WTC11 (cell line): ENCODE measurements at regions of chr11 and their contacts with region 1.

Region 1: DNA sequence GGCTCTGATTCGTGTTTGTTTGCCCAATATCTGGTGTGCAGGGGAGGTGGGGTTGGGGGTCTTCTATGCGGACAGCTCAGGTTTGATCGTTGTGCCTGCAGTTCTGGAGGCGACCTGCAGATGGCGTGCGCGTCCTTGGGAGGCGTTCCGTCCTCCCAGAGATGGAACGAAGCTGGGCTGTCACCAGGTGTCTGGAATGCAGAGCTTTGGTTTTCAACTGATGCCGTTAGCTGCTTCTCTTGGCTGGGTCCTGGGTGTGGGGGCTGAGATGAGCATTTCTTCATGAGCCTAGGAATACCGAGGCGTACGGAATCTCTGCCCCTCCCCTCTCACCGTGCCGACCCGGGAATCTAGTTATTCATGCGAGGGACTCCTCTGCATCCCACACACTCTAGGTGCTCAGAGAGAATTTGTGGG is 98.6 kb downstream of the CEP164 start:
- DNase-seq: peak; percentile 96
- ATAC-seq: peak; percentile 79
- H3K4me3 Mint-ChIP-seq: peak overlapping the region; percentile 16; the same call in 1 of the 2 replicates
- H3K27ac Mint-ChIP-seq: no peak overlapping the region
- H3K4me1 Mint-ChIP-seq: peaks cover 20% of the 10 kb centered on the region
- H3K27me3 Mint-ChIP-seq: peaks cover 3% of the 10 kb centered on the region; the same call in 1 of the 2 replicates
- CTCF ChIP-seq: peak; percentile 95

Region 2: DNA sequence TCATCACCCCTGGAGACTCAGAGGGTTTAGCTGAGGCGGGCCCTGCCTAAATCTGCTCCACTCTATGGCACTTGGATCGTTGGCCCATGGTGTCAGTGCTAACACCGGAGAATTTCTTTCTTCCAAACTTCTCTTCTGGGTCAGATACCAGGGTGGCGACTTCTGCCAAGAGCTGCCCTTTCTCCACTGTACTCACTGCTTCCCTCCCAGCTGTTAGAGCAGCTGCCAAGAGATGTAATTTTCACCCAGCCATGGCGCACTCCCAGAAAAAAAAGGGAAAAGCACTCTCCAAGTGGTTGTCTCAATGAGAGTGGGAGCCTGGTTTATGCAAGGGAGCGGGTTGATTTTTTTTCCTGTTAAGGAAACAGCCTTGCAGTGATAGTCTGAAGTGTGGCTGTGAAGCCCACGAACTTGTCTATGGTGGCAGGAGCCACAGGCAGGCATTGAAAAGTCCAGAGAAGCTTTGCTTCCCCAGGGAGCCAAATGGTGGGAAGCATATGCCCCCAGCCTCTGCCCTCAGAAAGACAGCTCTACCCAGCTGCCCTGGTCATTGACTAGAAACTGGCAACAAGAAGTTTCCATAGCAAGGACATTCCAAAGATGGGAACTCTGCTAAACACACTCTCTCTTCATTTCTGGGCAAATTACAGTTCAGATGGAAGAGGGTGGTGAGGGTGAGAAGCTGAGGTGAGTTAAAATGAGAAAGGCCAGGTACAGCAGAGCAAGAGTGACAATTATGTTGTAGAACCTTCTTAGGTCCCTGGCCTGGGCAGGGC is 205.1 kb before region 1 on chr11:
- CTCF ChIA-PET with region 1: no interaction called
- POLR2A ChIA-PET with region 1: no interaction called
- DNase-seq: no peak
- ATAC-seq: no peak
- H3K4me3 Mint-ChIP-seq: no peak overlapping the region
- H3K27ac Mint-ChIP-seq: no peak overlapping the region
- H3K4me1 Mint-ChIP-seq: peaks cover 3% of the 10 kb centered on the region; the same call in 1 of the 2 replicates
- H3K27me3 Mint-ChIP-seq: no peaks in the 10 kb centered on the region
- CTCF ChIP-seq: no peak

Region 3: DNA sequence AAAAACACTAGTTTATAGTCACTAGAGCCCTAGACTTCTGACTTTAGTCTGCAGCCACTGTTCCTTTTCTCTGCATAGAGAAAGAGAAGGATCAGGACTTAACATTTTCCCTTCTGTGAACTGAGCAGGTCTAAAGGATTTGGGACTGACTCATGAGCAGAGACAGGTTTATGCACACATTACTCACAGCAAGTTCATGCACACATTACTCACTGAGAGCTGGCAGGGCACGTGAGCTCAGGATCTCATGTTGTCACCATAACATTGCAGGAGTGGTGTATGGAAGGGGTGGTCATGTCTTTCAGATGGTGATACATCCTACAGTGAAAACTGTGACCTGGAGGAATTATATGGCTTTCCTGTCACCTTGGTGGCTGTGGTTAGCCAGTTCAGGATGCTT is 42.2 kb before region 1 on chr11:
- CTCF ChIA-PET with region 1: interaction called, 20 read pairs
- POLR2A ChIA-PET with region 1: no interaction called
- DNase-seq: no peak
- ATAC-seq: no peak
- H3K4me3 Mint-ChIP-seq: no peak overlapping the region
- H3K27ac Mint-ChIP-seq: no peak overlapping the region
- H3K4me1 Mint-ChIP-seq: peaks cover 7% of the 10 kb centered on the region
- H3K27me3 Mint-ChIP-seq: no peaks in the 10 kb centered on the region
- CTCF ChIP-seq: no peak

Region 4: DNA sequence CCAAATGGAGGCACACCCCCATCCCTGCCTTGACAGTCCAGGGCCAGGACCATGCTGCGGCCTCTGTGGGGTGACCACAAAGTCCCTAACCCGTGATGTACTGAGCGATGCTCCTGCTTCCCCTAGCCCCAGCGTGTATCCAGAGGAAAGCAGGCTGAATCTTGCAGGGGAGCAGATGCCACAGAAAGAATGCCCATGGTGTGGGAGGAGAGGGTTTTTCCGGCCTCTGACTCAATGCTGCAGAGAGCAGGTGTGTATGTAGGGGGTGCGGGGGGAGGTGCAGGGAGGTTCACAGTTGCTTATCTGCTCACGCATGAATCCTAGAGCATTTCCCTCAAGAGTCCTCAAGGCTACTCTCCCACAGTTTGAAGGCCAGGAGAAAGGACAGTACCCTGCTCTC is 32.0 kb after region 1 on chr11:
- CTCF ChIA-PET with region 1: interaction called, 14 read pairs
- POLR2A ChIA-PET with region 1: no interaction called
- DNase-seq: no peak
- ATAC-seq: no peak
- H3K4me3 Mint-ChIP-seq: no peak overlapping the region
- H3K27ac Mint-ChIP-seq: no peak overlapping the region
- H3K4me1 Mint-ChIP-seq: no peaks in the 10 kb centered on the region
- H3K27me3 Mint-ChIP-seq: no peaks in the 10 kb centered on the region; the same call in 1 of the 2 replicates
- CTCF ChIP-seq: no peak

Region 5: GRCh38 chr11:117511931-117512539 is 85.8 kb after region 1 on chr11:
- CTCF ChIA-PET with region 1: interaction called, 43 read pairs
- POLR2A ChIA-PET with region 1: no interaction called
- DNase-seq: no peak
- ATAC-seq: no peak
- H3K4me3 Mint-ChIP-seq: no peak overlapping the region
- H3K27ac Mint-ChIP-seq: peak overlapping the region; percentile 91
- H3K4me1 Mint-ChIP-seq: peaks cover 37% of the 10 kb centered on the region
- H3K27me3 Mint-ChIP-seq: no peaks in the 10 kb centered on the region
- CTCF ChIP-seq: no peak

Region 6: GRCh38 chr11:117583063-117583801 is 157.0 kb after region 1 on chr11:
- CTCF ChIA-PET with region 1: interaction called, 10 read pairs
- POLR2A ChIA-PET with region 1: no interaction called
- DNase-seq: no peak
- ATAC-seq: peak; percentile 83
- H3K4me3 Mint-ChIP-seq: no peak overlapping the region
- H3K27ac Mint-ChIP-seq: no peak overlapping the region
- H3K4me1 Mint-ChIP-seq: peaks cover 32% of the 10 kb centered on the region
- H3K27me3 Mint-ChIP-seq: peaks cover 6% of the 10 kb centered on the region; the same call in 1 of the 2 replicates
- CTCF ChIP-seq: no peak

Region 7: GRCh38 chr11:117717485-117718314 is 291.4 kb after region 1 on chr11:
- CTCF ChIA-PET with region 1: interaction called, 11 read pairs
- POLR2A ChIA-PET with region 1: no interaction called
- DNase-seq: peak; percentile 50
- ATAC-seq: peak; percentile 73
- H3K4me3 Mint-ChIP-seq: peak overlapping the region; percentile 47
- H3K27ac Mint-ChIP-seq: peak overlapping the region; percentile 60
- H3K4me1 Mint-ChIP-seq: peaks cover 63% of the 10 kb centered on the region
- H3K27me3 Mint-ChIP-seq: peaks cover 10% of the 10 kb centered on the region
- CTCF ChIP-seq: no peak